Breast epithelium (tissue), 4 donors: ENCODE measurements at regions of chr9 and their contacts with region 1.

Region 1: DNA sequence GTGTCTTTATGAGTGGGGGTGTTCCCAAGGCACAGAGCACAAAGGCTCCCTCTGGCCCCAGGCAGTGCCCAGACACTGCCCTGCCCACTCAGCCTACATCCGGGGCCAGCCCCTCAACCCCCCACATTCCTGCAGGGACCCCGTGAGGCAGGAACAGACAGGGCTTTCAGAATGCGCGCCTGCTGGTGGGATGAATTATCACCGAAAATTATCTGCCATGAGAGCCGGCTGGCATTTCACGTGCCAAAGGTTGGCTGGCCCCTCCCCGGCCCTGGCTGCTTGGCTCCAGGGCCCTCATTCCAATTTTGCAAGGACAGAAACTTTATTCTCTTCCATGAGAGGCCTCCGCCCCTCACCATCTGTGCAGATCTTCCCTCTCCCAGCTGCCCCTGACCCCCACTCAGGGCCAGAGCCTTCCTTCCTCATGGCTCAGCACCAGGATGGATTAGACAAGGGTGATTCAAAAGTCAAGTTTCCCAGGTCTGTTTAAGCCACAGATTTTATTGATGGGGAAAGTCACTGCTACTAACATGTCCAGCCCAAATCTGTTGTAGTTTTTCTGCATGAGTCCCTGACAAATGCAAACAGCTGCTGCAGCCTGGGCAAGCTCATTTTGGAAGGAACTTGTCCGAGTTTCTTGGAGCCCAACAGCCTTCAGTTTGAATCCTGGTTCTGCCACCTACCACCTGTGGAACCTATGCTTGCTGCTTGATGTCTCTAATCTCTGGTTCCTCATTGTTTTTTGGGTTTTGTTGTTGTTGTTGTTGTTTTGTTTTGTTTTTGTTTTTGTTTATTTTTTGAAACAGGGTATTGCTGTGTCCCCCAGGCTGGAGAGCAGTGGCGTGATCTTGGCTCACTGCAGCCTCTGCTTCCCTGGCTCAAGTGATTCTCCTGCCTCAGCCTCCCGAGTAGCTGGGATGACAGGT is 32.3 kb upstream of the WDR38 start:
- DNase-seq: no peak
- H3K4me3 ChIP-seq: no peak overlapping the region
- H3K27ac ChIP-seq: peak overlapping the region in 1 of 2 donors; percentile 7
- H3K4me1 ChIP-seq: no peaks in the 10 kb centered on the region
- H3K27me3 ChIP-seq: no peaks in the 10 kb centered on the region
- CTCF ChIP-seq: no peak
- POLR2A ChIP-seq: no peak

Region 2: DNA sequence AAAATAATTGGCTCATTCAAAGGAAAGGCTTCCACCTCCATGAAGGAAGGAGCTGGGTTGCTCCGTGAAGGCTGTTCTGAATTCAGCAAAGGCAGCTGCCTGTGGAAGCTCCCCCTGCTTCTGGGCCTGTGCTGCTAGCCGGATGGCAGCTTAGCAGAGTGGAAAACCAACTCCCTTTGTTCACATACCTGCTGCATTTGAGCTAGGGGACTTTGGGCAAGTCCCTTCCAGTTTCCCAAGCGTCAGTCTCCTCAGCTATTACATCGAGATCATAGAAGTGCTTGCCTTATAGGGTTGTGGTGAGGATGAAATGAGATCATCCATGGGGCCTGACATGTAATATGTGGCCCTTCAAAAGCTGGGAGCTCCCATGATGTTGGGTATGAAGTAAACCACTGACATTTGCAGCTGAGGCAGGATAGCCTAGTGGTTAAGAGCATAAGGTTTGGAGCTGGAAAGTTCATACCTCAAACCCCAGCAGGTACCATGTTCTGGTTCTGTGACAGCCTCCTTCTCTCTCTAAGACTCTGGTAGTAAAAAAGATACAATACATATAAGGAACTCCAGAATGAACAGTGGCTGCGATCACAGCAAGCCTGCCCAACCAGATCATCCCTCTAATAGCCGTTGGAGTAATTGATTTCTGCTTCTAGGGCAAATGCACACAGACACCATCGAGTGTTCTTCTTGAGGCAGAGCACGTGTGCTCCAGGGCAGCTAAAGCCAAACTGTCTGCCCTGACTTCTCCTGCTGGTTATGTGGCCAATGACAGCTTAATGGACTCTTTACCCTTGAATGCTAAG is 880.0 kb before region 1 on chr9:
- intact Hi-C with region 1: no loop called
- DNase-seq: no peak
- H3K4me3 ChIP-seq: no peak overlapping the region
- H3K27ac ChIP-seq: no peak overlapping the region
- H3K4me1 ChIP-seq: no peaks in the 10 kb centered on the region
- H3K27me3 ChIP-seq: no peaks in the 10 kb centered on the region
- CTCF ChIP-seq: no peak
- POLR2A ChIP-seq: no peak

Region 3: GRCh38 chr9:124800306-124801259 is 20.4 kb before region 1 on chr9:
- intact Hi-C with region 1: no loop called
- DNase-seq: no peak
- H3K4me3 ChIP-seq: peak overlapping the region in 1 of 3 donors; percentile 33
- H3K27ac ChIP-seq: peak overlapping the region in 1 of 2 donors; percentile 14
- H3K4me1 ChIP-seq: peaks cover 0 to 5% of the 10 kb centered on the region in 2 donors
- H3K27me3 ChIP-seq: no peaks in the 10 kb centered on the region
- CTCF ChIP-seq: no peak
- POLR2A ChIP-seq: no peak

Region 4: GRCh38 chr9:125233678-125234077 is 412.7 kb after region 1 on chr9:
- intact Hi-C with region 1: no loop called
- DNase-seq: no peak
- H3K4me3 ChIP-seq: no peak overlapping the region
- H3K27ac ChIP-seq: no peak overlapping the region
- H3K4me1 ChIP-seq: peaks cover 0 to 16% of the 10 kb centered on the region in 2 donors
- H3K27me3 ChIP-seq: no peaks in the 10 kb centered on the region
- CTCF ChIP-seq: no peak
- POLR2A ChIP-seq: no peak

Region 5: DNA sequence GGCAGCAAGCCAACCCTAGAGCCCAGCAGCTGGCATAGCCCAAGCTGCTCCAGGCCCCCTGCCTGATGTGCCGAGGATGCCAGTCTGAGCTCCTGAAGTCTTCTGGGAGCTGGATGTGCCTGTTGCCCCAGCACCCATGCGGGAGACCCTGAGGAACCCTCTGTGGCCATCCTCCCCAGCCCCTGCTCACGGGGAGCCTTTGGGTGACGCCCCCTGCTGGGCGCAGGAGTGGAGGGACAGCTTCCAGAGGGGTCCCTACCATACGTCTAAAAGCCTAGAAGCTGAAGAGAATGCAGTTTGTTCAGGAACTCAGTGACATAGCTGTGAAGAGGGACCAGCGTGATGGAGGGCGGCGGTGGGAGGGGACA is 1472.5 kb after region 1 on chr9:
- intact Hi-C with region 1: loop called (anchors 5 kb)
- DNase-seq: no peak
- H3K4me3 ChIP-seq: no peak overlapping the region
- H3K27ac ChIP-seq: no peak overlapping the region
- H3K4me1 ChIP-seq: no peaks in the 10 kb centered on the region
- H3K27me3 ChIP-seq: no peaks in the 10 kb centered on the region
- CTCF ChIP-seq: no peak
- POLR2A ChIP-seq: no peak